Activated CD8-positive, alpha-beta memory T cell treated with anti-CD3 and anti-CD28 coated beads, Interleukin-2, amount 10 ng/mL, durations not matched to agents 7 days and 5 days (primary cell): ENCODE measurements at regions of chr22 and their contacts with region 1.

Region 1: DNA sequence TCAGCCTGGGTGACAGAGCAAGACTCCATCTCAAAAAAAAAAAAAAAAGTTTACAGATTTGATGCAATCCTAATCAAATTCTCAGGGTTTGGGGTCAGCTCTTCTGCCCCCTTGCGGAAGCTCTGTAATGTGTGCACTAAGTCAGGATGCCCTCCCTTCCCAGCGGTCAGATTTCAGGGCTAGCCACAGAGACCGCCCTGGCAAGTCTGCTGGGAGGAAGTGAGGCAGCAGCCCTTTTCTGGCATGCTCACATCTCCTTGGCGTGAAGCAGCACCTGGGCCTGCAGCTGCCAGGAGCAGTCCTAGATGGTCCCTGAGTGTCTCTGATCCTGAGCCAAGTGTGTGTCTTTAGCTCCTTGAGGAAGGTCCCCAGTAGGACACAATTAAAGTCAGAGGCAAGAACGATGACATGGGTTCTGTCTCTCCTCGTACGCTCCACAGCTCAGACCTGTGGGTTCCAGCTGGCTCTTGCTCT is 10.9 kb upstream of the APOBEC3C start:
- DNase-seq: peak; percentile 94
- ATAC-seq: peak; percentile 92
- H3K4me3 Mint-ChIP-seq: no peak overlapping the region
- H3K27ac Mint-ChIP-seq: peak overlapping the region; percentile 73
- H3K4me1 Mint-ChIP-seq: peaks cover 13% of the 10 kb centered on the region
- H3K27me3 Mint-ChIP-seq: peaks cover 11% of the 10 kb centered on the region

Region 2: DNA sequence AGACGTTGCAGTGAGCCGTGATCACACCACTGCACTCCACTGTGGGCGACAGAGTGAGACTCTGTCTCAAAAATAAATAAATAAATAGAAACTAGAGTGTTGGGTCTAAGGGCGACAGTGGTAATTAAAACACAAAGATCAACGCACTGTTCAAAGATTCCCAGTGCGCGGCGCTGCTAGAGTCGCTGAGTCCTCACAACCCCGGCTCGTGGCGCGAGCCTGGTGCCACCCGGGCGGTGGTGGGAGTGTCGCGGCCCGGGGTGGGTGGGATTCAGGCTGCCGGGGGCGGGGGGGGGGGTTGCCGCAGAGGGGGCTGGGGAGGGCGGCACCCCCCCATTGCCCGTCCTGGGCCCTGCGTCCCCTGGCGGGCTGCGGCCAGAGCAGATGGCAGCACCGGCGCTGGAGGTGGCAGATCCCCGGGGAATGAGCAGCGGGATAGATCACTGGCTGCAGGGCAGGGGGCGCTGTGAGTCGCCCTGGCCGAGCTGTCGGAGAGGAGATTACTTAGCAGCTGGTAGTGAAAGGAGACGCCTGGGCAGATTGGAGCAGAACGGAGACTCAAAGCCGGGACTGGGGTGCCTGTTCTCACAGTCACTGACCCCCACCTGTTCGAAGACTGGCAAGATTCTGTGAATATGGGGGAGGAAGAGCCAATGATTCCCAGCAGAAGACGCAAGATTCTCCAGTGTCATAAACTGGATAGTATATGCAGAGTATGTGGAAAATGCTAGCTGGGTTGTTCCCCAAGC is 76.0 kb before region 1 on chr22:
- CTCF ChIA-PET with region 1: interaction called, 11 read pairs
- DNase-seq: peak; percentile 58
- ATAC-seq: peak; percentile 82
- H3K4me3 Mint-ChIP-seq: no peak overlapping the region
- H3K27ac Mint-ChIP-seq: no peak overlapping the region
- H3K4me1 Mint-ChIP-seq: peaks cover 5% of the 10 kb centered on the region
- H3K27me3 Mint-ChIP-seq: peaks cover 48% of the 10 kb centered on the region

Region 3: DNA sequence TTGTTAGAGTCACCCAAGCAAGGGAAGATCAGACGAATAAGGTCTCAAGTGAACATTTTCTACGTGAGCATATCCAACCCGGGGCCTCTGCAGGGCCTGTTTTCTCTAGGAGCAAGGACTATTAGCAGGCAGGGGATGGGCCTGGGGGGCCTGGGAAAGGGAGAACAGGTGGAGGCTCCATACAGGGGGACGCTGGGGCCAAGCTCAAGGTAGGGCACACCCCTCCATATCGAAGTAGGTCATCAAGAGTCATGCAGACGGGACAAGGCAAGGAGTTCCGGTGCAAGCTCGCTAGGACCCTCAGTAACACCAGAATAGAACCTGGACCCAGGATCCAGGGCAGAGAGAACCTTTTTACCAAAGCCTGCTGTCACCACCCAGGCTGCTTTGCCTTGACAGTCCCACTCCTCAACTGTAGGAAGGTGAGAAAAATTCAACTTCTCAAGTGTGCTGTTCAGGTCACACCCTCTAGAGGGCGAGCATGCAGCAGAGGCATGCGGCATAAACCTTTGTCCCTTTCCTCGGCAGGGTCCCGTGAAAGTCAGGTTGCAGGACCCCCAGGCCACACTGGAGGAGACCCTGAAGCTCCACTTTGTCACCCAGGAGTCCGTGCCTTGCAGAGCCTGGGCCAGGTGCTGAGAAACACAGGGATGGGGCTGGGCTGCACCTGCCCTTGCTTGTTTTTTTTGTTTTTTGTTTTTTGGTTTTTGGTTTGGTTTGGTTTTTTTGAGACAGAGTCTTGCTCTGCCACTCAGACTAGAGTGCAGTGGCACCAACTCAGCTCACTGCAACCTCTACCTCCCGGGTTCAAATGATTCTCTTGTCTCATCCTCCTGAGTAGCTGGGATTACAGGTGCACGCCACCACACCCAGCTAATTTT is 29.7 kb before region 1 on chr22:
- CTCF ChIA-PET with region 1: interaction called, 75 read pairs
- DNase-seq: peak; percentile 73
- ATAC-seq: peak; percentile 91
- H3K4me3 Mint-ChIP-seq: no peak overlapping the region
- H3K27ac Mint-ChIP-seq: peak overlapping the region; percentile 16
- H3K4me1 Mint-ChIP-seq: peaks cover 12% of the 10 kb centered on the region
- H3K27me3 Mint-ChIP-seq: peaks cover 25% of the 10 kb centered on the region

Region 4: DNA sequence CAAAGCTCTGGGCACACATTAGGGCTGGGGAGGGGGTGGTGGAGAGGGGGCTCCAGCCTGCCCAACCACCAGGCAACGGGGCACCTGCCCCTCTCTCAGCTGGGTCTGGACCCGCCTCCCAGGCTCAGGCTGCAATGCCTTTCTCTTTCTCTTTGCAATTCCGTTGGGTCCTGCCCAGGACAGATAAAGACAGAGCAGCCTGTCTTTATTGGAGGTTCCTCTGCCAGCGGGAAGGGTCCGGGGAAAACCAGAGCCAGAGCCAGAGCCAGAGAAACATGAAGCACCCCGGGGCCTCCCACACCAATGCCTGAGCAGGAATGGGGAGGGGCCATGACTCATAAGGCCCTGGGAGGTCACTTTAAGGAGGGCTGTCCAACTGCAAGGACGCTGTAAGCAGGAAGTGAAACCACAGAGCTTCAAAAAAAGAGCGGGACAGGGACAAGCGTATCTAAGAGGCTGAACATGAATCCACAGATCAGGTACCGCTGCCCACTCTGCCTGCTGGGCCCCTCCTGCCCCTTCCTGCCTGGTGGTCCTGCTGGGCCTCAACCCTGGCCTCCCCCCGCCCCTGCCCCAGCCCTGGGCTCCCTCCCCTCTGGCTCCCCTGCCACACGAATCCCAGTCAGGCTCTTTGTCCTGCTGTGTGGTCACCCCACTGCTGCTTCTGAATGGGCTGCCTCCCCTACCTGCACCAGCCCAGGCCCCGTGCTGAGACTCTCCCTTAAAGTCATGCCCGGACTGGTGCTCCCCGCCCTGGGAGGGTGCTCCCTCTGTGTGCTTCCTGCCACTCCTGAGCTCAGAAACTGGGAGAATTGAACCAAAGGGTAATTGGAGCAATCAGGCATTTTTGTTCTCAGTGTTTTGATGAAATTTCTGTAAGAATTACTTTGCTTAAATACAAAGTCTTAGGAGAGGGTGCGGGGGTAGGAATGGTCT is 20.9 kb before region 1 on chr22 and contains the start of gene APOBEC3B:
- CTCF ChIA-PET with region 1: interaction called, 21 read pairs
- DNase-seq: peak; percentile 92
- ATAC-seq: peak; percentile 84
- H3K4me3 Mint-ChIP-seq: peak within 1 kb of the TSS; percentile 76
- H3K27ac Mint-ChIP-seq: peak within 1 kb of the TSS; percentile 97
- H3K4me1 Mint-ChIP-seq: peaks cover 54% of the 10 kb centered on the region
- H3K27me3 Mint-ChIP-seq: no peaks in the 10 kb centered on the region
- total RNA-seq, gene APOBEC3B: 32.8 to 82.6 TPM

Region 5: GRCh38 chr22:38989466-38989865 is 13.7 kb before region 1 on chr22:
- CTCF ChIA-PET with region 1: interaction called, 14 read pairs
- DNase-seq: peak; percentile 73
- ATAC-seq: peak; percentile 28
- H3K4me3 Mint-ChIP-seq: no peak overlapping the region
- H3K27ac Mint-ChIP-seq: peak overlapping the region; percentile 66
- H3K4me1 Mint-ChIP-seq: peaks cover 49% of the 10 kb centered on the region
- H3K27me3 Mint-ChIP-seq: peaks cover 3% of the 10 kb centered on the region

Region 6: DNA sequence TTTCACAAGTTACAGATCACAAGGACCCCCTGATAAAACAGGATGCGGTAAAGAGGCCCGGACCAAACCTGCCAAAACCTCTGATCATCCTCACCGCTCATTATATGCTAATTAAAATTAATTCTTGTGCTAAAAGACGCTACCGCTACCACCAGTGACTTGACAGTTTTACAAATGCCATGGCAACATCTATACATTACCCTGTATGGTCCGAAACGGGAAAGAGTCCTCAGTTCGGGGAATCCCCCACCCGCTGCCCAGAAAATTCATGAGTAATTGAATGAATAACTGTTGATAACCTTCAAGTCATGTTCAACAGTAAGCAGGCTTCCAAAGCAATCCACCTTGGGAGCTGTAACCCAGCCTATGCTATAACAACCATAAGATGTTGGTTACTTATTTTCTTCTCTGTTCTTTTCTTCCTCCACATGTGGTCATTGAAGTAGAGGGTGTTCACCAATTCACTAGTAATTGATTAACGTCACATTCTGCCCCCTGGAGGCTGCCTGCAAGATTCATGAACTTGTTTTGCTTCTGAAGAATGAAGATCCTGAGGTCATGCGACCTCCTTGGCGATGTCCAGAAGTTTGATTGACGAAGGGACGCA is 114.5 kb after region 1 on chr22:
- CTCF ChIA-PET with region 1: interaction called, 20 read pairs
- DNase-seq: peak; percentile 90
- ATAC-seq: peak; percentile 81
- H3K4me3 Mint-ChIP-seq: peak overlapping the region; percentile 59
- H3K27ac Mint-ChIP-seq: peak overlapping the region; percentile 91
- H3K4me1 Mint-ChIP-seq: peaks cover 60% of the 10 kb centered on the region
- H3K27me3 Mint-ChIP-seq: no peaks in the 10 kb centered on the region